ENCODE measurements at regions of chr7 and their contacts with region 1.

Region 1: GRCh38 chr7:43612599-43613589 is 30.0 kb downstream of the STK17A start:
- DNase-seq: no peak
- H3K4me3 ChIP-seq: no peak overlapping the region
- H3K4me3 Mint-ChIP-seq: peak overlapping the region in 7 of 8 donors; percentile 5 to 83 (median 51)
- H3K27ac ChIP-seq: peak overlapping the region; percentile 11
- H3K27ac Mint-ChIP-seq: peak overlapping the region; percentile 86 to 90 (median 87)
- H3K4me1 ChIP-seq: peaks cover 90% of the 10 kb centered on the region
- H3K4me1 Mint-ChIP-seq: peaks cover 43 to 64% (median 48%) of the 10 kb centered on the region in 4 donors
- H3K27me3 ChIP-seq: no peaks in the 10 kb centered on the region
- H3K27me3 Mint-ChIP-seq: no peaks in the 10 kb centered on the region

Region 2: GRCh38 chr7:43501870-43502269 is 111.0 kb before region 1 on chr7:
- CTCF ChIA-PET with region 1: no interaction called
- POLR2A ChIA-PET with region 1: no interaction called
- intact Hi-C with region 1: no loop called
- DNase-seq: no peak
- H3K4me3 ChIP-seq: no peak overlapping the region
- H3K4me3 Mint-ChIP-seq: no peak overlapping the region
- H3K27ac ChIP-seq: no peak overlapping the region
- H3K27ac Mint-ChIP-seq: no peak overlapping the region
- H3K4me1 ChIP-seq: no peaks in the 10 kb centered on the region
- H3K4me1 Mint-ChIP-seq: no peaks in the 10 kb centered on the region
- H3K27me3 ChIP-seq: no peaks in the 10 kb centered on the region
- H3K27me3 Mint-ChIP-seq: peaks cover 8 to 21% of the 10 kb centered on the region in 2 donors

Region 3: DNA sequence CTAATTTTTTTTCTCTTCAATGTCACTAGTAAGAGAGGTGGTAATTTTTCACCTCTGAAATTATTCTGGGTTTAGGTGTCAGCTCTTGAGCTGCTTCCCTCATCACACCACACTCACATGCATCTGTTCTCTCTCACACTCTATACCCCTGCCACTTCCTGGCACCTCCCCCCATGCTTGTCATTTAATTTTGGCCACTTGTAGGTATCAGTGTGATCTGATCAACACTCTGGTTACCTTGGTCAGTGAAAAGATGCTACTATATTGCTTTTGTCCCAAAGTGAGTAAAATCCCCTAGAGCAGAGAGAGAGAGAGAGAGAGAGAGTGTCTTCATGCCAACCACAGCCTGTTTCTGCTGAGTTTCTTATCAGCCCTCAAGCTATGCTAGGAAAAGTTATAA is 12.6 kb after region 1 on chr7:
- CTCF ChIA-PET with region 1: interaction called, 6 read pairs
- POLR2A ChIA-PET with region 1: interaction called, 5 read pairs
- intact Hi-C with region 1: loop called (anchors 2 kb)
- DNase-seq: peak; percentile 63 to 82 (median 68)
- H3K4me3 ChIP-seq: no peak overlapping the region
- H3K4me3 Mint-ChIP-seq: peak overlapping the region; percentile 59 to 73 (median 70)
- H3K27ac ChIP-seq: peak overlapping the region; percentile 30
- H3K27ac Mint-ChIP-seq: peak overlapping the region in 6 of 7 donors; percentile 84 to 97 (median 89)
- H3K4me1 ChIP-seq: peaks cover 96% of the 10 kb centered on the region
- H3K4me1 Mint-ChIP-seq: peaks cover 3 to 94% (median 69%) of the 10 kb centered on the region in 4 donors
- H3K27me3 ChIP-seq: no peaks in the 10 kb centered on the region
- H3K27me3 Mint-ChIP-seq: no peaks in the 10 kb centered on the region